Activated CD4-positive, alpha-beta T cell treated with anti-CD3 and anti-CD28 coated beads for 36 hours (primary cell): ENCODE measurements at regions of chr1 and their contacts with region 1.

Region 1: GRCh38 chr1:46616277-46617107 is at the start of gene MOB3C:
- DNase-seq: peak; percentile 73
- ATAC-seq: peak; percentile 62
- H3K4me3 Mint-ChIP-seq: peak within 1 kb of the TSS; percentile 87
- H3K27ac Mint-ChIP-seq: peak within 1 kb of the TSS; percentile 89
- H3K4me1 Mint-ChIP-seq: peaks cover 41% of the 10 kb centered on the region
- H3K27me3 Mint-ChIP-seq: no peaks in the 10 kb centered on the region
- total RNA-seq, gene MOB3C: 8.5 to 8.9 TPM

Region 2: GRCh38 chr1:46303038-46303871 is 313.2 kb before region 1 on chr1 and contains the starts of genes LRRC41 and UQCRH:
- CTCF ChIA-PET with region 1: no interaction called
- POLR2A ChIA-PET with region 1: no interaction called
- intact Hi-C with region 1: no loop called
- DNase-seq: peak; percentile 96
- ATAC-seq: peak; percentile 88
- H3K4me3 Mint-ChIP-seq: peak within 1 kb of the TSS; percentile 95
- H3K27ac Mint-ChIP-seq: peak within 1 kb of the TSS; percentile 95
- H3K4me1 Mint-ChIP-seq: peaks cover 44% of the 10 kb centered on the region
- H3K27me3 Mint-ChIP-seq: no peaks in the 10 kb centered on the region
- total RNA-seq, gene LRRC41: 33.4 to 34.7 TPM
- total RNA-seq, gene UQCRH: 258 to 391 TPM

Region 3: GRCh38 chr1:46581681-46582455 is 34.6 kb before region 1 on chr1:
- CTCF ChIA-PET with region 1: interaction called, 4 read pairs
- POLR2A ChIA-PET with region 1: interaction called, 3 read pairs
- intact Hi-C with region 1: loop called in 1 of 2 experiments (anchors 1 kb)
- DNase-seq: peak; percentile 26
- ATAC-seq: peak; percentile 95
- H3K4me3 Mint-ChIP-seq: no peak overlapping the region
- H3K27ac Mint-ChIP-seq: peak overlapping the region; percentile 91
- H3K4me1 Mint-ChIP-seq: peaks cover 21% of the 10 kb centered on the region
- H3K27me3 Mint-ChIP-seq: no peaks in the 10 kb centered on the region

Region 4: GRCh38 chr1:46603858-46604549 is 12.5 kb before region 1 on chr1 and contains the start of gene MKNK1:
- CTCF ChIA-PET with region 1: interaction called, 47 read pairs
- POLR2A ChIA-PET with region 1: interaction called, 19 read pairs
- intact Hi-C with region 1: loop called (anchors 1 kb)
- DNase-seq: peak; percentile 99
- ATAC-seq: peak; percentile 98
- H3K4me3 Mint-ChIP-seq: peak within 1 kb of the TSS; percentile 87
- H3K27ac Mint-ChIP-seq: peak within 1 kb of the TSS; percentile 82
- H3K4me1 Mint-ChIP-seq: peaks cover 55% of the 10 kb centered on the region
- H3K27me3 Mint-ChIP-seq: no peaks in the 10 kb centered on the region
- total RNA-seq, gene MKNK1: 27.8 to 31.0 TPM

Region 5: GRCh38 chr1:46667782-46668760 is 51.6 kb after region 1 on chr1 and contains the start of gene ATPAF1:
- CTCF ChIA-PET with region 1: no interaction called
- POLR2A ChIA-PET with region 1: interaction called, 3 read pairs
- intact Hi-C with region 1: loop called (anchors 5 kb)
- DNase-seq: peak; percentile 84
- ATAC-seq: peak; percentile 96
- H3K4me3 Mint-ChIP-seq: no peak within 1 kb of the TSS
- H3K27ac Mint-ChIP-seq: peak within 1 kb of the TSS; percentile 75
- H3K4me1 Mint-ChIP-seq: peaks cover 19% of the 10 kb centered on the region
- H3K27me3 Mint-ChIP-seq: no peaks in the 10 kb centered on the region
- total RNA-seq, gene ATPAF1: 46.1 to 48.5 TPM

Region 6: GRCh38 chr1:46724991-46725735 is 108.7 kb after region 1 on chr1:
- CTCF ChIA-PET with region 1: no interaction called
- POLR2A ChIA-PET with region 1: no interaction called
- intact Hi-C with region 1: loop called in 1 of 2 experiments (anchors 1 kb)
- DNase-seq: peak; percentile 80
- ATAC-seq: peak; percentile 98
- H3K4me3 Mint-ChIP-seq: no peak overlapping the region
- H3K27ac Mint-ChIP-seq: no peak overlapping the region
- H3K4me1 Mint-ChIP-seq: no peaks in the 10 kb centered on the region
- H3K27me3 Mint-ChIP-seq: peaks cover 29% of the 10 kb centered on the region